Activated CD4-positive, alpha-beta T cell treated with anti-CD3 and anti-CD28 coated beads for 36 hours (primary cell): ENCODE measurements at regions of chr17 and their contacts with region 1.

Region 1: GRCh38 chr17:7478276-7479153 is 916 bp downstream of the ZBTB4 start:
- DNase-seq: peak; percentile 80
- ATAC-seq: peak; percentile 42
- H3K4me3 Mint-ChIP-seq: peak overlapping the region; percentile 87
- H3K27ac Mint-ChIP-seq: peak overlapping the region; percentile 91
- H3K4me1 Mint-ChIP-seq: peaks cover 67% of the 10 kb centered on the region
- H3K27me3 Mint-ChIP-seq: no peaks in the 10 kb centered on the region

Region 2: GRCh38 chr17:7444682-7445618 is 33.6 kb before region 1 on chr17 and contains the start of gene CHRNB1:
- CTCF ChIA-PET with region 1: interaction called, 9 read pairs
- POLR2A ChIA-PET with region 1: no interaction called
- intact Hi-C with region 1: loop called in 1 of 2 experiments (anchors 2 kb)
- DNase-seq: peak; percentile 31
- ATAC-seq: peak; percentile 6
- H3K4me3 Mint-ChIP-seq: peak within 1 kb of the TSS; percentile 47
- H3K27ac Mint-ChIP-seq: no peak within 1 kb of the TSS
- H3K4me1 Mint-ChIP-seq: peaks cover 26% of the 10 kb centered on the region
- H3K27me3 Mint-ChIP-seq: peaks cover 43% of the 10 kb centered on the region
- total RNA-seq, gene CHRNB1: 7.8 to 8.7 TPM